AG04450 (cell line): ENCODE measurements at regions of chr13 and their contacts with region 1.

Region 1: GRCh38 chr13:30968846-30969245 is 36.4 kb downstream of the TEX26 start:
- DNase-seq: no peak
- H3K4me3 ChIP-seq: no peak overlapping the region
- H3K27ac ChIP-seq: no peak overlapping the region
- H3K27me3 ChIP-seq: no peaks in the 10 kb centered on the region
- CTCF ChIP-seq: no peak

Region 2: GRCh38 chr13:30892966-30893365 is 75.9 kb before region 1 on chr13:
- CTCF ChIA-PET with region 1: no interaction called
- POLR2A ChIA-PET with region 1: no interaction called
- DNase-seq: no peak
- H3K4me3 ChIP-seq: no peak overlapping the region
- H3K27ac ChIP-seq: no peak overlapping the region
- H3K27me3 ChIP-seq: no peaks in the 10 kb centered on the region
- CTCF ChIP-seq: peak; percentile 60

Region 3: GRCh38 chr13:30978981-30979956 is 10.4 kb after region 1 on chr13:
- CTCF ChIA-PET with region 1: interaction called, 11 read pairs
- POLR2A ChIA-PET with region 1: no interaction called
- DNase-seq: no peak
- H3K4me3 ChIP-seq: no peak overlapping the region
- H3K27ac ChIP-seq: no peak overlapping the region
- H3K27me3 ChIP-seq: no peaks in the 10 kb centered on the region
- CTCF ChIP-seq: peak; percentile 44